Activated CD4-positive, alpha-beta T cell treated with anti-CD3 and anti-CD28 coated beads, Interleukin-2, amount 10 ng/mL, durations not matched to agents 24 days and 14 days (primary cell): ENCODE measurements at regions of chr7 and their contacts with region 1.

Region 1: DNA sequence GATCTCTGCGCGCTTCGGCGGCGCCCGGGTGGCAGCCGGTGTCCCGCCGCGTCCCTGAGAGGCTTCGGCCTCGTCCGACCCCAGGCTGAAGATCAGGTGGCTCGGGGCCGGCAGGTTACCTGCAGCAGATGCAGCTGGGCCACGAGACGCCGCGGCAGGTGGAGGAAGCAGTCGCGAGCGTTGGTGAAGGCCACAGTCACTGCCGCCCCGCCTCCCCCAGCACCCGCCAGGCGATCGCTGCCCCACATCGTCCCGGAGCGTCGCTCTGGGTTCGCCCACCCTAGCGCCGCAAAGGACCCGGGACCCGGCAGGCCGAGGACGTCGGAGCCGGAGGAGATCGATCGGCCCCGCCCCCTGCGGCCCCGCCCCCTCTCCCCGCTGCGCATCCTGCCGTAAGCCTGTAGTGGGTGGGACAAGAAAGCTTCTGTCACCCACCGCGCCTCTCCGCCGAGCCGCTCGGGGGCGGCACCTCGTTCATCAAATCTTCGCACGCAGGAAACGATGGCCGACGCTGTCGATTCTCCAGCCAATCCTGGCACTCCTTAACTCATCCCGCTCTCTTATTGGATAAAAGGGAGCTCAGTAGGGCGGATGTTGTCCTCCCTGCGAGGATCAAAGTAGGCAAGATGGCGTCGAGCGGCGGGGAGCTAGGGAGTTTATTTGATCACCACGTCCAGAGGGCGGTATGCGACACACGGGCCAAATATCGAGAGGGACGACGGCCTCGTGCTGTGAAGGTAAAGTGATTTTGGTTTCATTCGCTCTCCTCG is at the starts of genes PEX1 and RBM48:
- DNase-seq: peak; percentile 98
- H3K4me3 Mint-ChIP-seq: peak within 1 kb of the TSS; percentile 98
- H3K27ac Mint-ChIP-seq: peak within 1 kb of the TSS; percentile 98
- H3K4me1 Mint-ChIP-seq: peaks cover 22% of the 10 kb centered on the region
- H3K27me3 Mint-ChIP-seq: peaks cover 2% of the 10 kb centered on the region
- total RNA-seq, gene PEX1: 14.4 and 14.8 TPM in 2 replicates
- total RNA-seq, gene RBM48: 14.4 and 17.3 TPM in 2 replicates

Region 2: GRCh38 chr7:92134271-92135051 is 393.9 kb before region 1 on chr7 and contains the start of gene CYP51A1:
- intact Hi-C with region 1: loop called (anchors 1 kb)
- DNase-seq: peak; percentile 99
- H3K4me3 Mint-ChIP-seq: peak within 1 kb of the TSS; percentile 95
- H3K27ac Mint-ChIP-seq: peak within 1 kb of the TSS; percentile 100
- H3K4me1 Mint-ChIP-seq: peaks cover 40% of the 10 kb centered on the region
- H3K27me3 Mint-ChIP-seq: no peaks in the 10 kb centered on the region
- total RNA-seq, gene CYP51A1: 103 and 106 TPM in 2 replicates

Region 3: DNA sequence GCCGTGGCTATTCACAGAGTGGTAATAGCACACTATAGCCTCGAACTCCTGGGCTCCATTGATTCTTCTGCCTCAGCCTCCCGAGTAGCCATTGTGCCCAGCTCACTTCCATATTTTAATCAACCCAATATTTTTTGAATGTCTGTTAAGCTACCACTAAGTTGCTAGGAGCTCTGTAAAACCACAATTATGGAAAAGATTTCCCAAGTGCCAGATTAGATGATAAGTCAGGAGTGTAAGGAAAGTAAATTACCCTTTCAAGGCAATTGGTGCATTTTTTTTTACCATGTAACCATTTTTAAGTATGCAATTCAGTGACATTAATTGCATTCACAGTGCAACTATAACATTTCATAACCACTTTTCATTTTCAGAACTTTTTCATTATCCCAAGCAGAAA is 168.6 kb before region 1 on chr7:
- intact Hi-C with region 1: no loop called
- DNase-seq: no peak
- H3K4me3 Mint-ChIP-seq: no peak overlapping the region
- H3K27ac Mint-ChIP-seq: no peak overlapping the region
- H3K4me1 Mint-ChIP-seq: peaks cover 3% of the 10 kb centered on the region
- H3K27me3 Mint-ChIP-seq: no peaks in the 10 kb centered on the region

Region 4: DNA sequence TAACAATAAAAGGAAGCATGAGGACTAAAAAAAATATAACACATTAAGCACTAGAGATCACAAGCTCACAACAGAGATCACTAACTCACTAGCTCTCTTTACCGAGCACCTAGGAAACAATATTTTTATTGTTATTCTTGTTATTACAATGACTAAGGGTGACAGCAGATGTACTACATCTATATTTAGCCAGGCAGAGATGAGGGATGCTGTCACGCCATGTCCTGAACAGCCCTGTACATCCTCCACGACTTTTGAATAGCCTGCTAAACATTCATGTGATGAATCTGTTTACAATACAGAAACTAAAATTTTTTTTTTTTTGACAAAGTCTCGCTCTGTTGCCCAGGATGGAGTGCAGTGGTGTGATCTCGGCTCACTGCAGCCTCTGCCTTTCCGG is 39.1 kb after region 1 on chr7:
- intact Hi-C with region 1: loop called (anchors 5 kb)
- DNase-seq: no peak
- H3K4me3 Mint-ChIP-seq: no peak overlapping the region
- H3K27ac Mint-ChIP-seq: no peak overlapping the region
- H3K4me1 Mint-ChIP-seq: no peaks in the 10 kb centered on the region
- H3K27me3 Mint-ChIP-seq: no peaks in the 10 kb centered on the region

Region 5: GRCh38 chr7:92633211-92633906 is 105.0 kb after region 1 on chr7:
- intact Hi-C with region 1: no loop called
- DNase-seq: peak; percentile 84
- H3K4me3 Mint-ChIP-seq: peak overlapping the region; percentile 65
- H3K27ac Mint-ChIP-seq: peak overlapping the region; percentile 97
- H3K4me1 Mint-ChIP-seq: peaks cover 64% of the 10 kb centered on the region
- H3K27me3 Mint-ChIP-seq: no peaks in the 10 kb centered on the region

Region 6: DNA sequence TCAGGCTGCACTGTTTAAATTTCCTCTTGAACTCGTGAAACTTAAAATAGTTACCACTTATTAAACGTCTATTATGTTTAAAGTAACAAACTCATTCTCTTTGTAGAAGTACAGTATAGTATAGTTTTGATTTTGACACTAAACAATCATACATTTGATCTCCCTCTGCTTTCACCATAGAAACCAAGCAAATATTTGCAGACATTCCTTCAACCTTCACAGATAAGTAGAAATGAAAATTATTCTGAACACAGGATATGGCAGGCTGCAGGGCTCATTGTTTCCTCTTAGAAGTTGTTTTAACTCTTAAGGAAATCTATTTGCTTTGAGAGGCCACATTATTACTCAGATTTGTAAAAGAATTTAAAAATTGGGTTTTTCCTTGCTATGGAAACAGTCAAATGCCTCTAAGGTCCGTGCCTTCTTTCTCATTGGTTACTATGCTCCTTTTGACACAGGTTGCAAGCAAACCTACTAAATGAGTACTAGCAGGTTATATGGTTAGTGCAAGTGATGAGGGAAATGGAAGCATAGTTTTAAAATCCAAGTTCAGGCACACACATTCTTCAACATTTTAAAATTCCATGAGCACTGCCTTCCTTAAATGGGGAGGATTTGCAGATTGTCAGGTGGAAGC is 154.6 kb after region 1 on chr7:
- intact Hi-C with region 1: loop called (anchors 5 kb)
- DNase-seq: peak; percentile 75
- H3K4me3 Mint-ChIP-seq: peak overlapping the region; percentile 47
- H3K27ac Mint-ChIP-seq: peak overlapping the region; percentile 96
- H3K4me1 Mint-ChIP-seq: peaks cover 79% of the 10 kb centered on the region
- H3K27me3 Mint-ChIP-seq: no peaks in the 10 kb centered on the region

Region 7: DNA sequence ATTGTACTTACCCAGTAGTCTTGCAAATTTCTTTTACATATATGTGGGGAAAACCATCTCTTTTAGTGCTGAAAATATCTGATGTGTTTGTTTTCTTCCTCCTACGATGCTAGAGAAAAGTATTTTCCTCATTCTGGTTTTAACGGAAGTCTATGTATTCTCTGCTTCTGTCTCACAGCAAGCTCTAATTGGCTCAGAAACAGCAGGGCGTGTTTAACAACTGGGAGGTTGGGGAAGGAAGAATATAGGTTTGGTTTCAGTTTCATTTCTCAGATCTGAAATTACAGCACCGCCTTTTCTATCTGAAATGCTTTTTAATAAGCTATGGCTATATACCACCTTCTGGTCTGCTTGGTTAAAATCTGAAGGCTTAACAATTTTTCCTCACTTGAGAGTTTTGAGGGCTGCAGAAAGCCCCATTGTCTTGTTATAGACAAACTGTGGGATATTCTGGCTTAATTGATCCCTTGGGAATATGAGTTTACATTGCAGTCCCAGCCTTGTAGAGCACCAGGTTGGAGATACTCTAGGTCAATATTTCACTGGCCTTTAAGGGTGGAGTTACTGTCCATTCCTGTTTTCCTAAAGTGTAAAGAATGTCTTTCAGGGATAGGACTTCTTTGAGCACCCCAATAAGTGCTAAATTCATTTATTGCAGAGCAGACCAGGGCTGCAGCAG is 589.6 kb after region 1 on chr7 and contains the start of gene SAMD9:
- intact Hi-C with region 1: loop called (anchors 2 kb)
- DNase-seq: peak; percentile 90
- H3K4me3 Mint-ChIP-seq: peak within 1 kb of the TSS; percentile 90
- H3K27ac Mint-ChIP-seq: peak within 1 kb of the TSS; percentile 90
- H3K4me1 Mint-ChIP-seq: peaks cover 54% of the 10 kb centered on the region
- H3K27me3 Mint-ChIP-seq: no peaks in the 10 kb centered on the region
- total RNA-seq, gene SAMD9: 8.6 and 9.4 TPM in 2 replicates

Region 8: GRCh38 chr7:94004024-94004951 is 1475.9 kb after region 1 on chr7 and contains the start of gene BET1:
- intact Hi-C with region 1: loop called (anchors 5 kb)
- DNase-seq: peak; percentile 98
- H3K4me3 Mint-ChIP-seq: peak within 1 kb of the TSS; percentile 94
- H3K27ac Mint-ChIP-seq: peak within 1 kb of the TSS; percentile 96
- H3K4me1 Mint-ChIP-seq: peaks cover 20% of the 10 kb centered on the region
- H3K27me3 Mint-ChIP-seq: peaks cover 17% of the 10 kb centered on the region
- total RNA-seq, gene BET1: 19.1 and 20.0 TPM in 2 replicates